Natural killer cell (primary cell): ENCODE measurements at regions of chr11 and their contacts with region 1.

Region 1: GRCh38 chr11:112219476-112220232 is 6.6 kb upstream of the PTS start:
- DNase-seq: peak in 1 of 2 donors; percentile 91
- ATAC-seq: peak; percentile 97 to 100 (median 100)
- H3K4me3 ChIP-seq: no peak overlapping the region
- H3K4me3 Mint-ChIP-seq: no peak overlapping the region
- H3K27ac ChIP-seq: no peak overlapping the region
- H3K27ac Mint-ChIP-seq: no peak overlapping the region
- H3K4me1 ChIP-seq: no peaks in the 10 kb centered on the region
- H3K4me1 Mint-ChIP-seq: peaks cover 0 to 6% of the 10 kb centered on the region in 2 donors
- H3K27me3 ChIP-seq: no peaks in the 10 kb centered on the region
- H3K27me3 Mint-ChIP-seq: no peaks in the 10 kb centered on the region
- CTCF ChIP-seq: peak; percentile 82

Region 2: DNA sequence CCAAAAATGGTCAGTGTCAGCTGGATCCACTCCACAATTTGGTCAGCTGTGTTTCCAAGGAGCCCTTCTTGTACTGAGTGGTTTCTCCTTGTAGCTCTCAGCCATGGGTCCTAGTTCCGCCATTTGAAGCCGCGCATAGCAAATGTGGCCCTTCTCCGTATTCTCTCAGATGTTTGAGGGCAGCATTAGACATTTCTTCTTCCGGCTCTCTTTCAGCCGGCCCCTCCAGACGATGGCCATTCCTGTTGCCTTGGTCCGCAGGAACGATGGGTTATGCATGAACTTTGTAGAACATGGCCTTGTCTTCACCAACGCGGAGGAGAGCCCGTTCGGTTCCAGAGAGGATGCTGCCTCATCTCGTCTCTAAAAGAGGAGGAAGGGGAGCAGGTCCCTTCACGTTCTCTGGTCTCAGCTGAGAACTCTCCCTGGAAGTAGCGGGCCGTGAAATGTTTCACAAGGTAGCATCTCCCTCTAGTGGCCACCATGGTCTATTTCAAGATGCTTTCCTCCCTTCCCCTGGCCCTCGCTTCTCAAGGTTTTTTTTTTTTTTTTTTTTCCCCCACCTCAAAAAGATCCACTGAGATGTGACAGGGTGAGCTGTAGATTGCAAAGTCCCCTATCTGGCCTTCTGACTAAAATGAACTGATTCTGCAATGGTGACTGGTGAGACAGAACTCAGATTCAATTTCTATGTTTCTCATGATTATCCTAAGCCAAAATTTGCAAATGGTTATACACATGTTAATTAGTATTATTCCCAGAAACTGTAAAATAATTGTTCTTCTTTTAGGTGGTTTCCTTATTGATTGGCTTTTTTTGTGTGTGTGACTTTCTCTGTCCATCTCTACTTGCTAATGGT is 60.8 kb after region 1 on chr11:
- intact Hi-C with region 1: loop called (anchors 1 kb)
- DNase-seq: peak; percentile 50 to 90
- ATAC-seq: peak; percentile 90 to 93 (median 91)
- H3K4me3 ChIP-seq: peak overlapping the region; percentile 55
- H3K4me3 Mint-ChIP-seq: peak overlapping the region; percentile 95
- H3K27ac ChIP-seq: peak overlapping the region; percentile 10
- H3K27ac Mint-ChIP-seq: peak overlapping the region; percentile 73 to 81
- H3K4me1 ChIP-seq: peaks cover 15% of the 10 kb centered on the region
- H3K4me1 Mint-ChIP-seq: peaks cover 12 to 16% of the 10 kb centered on the region in 2 donors
- H3K27me3 ChIP-seq: no peaks in the 10 kb centered on the region
- H3K27me3 Mint-ChIP-seq: peaks cover 0 to 3% of the 10 kb centered on the region in 2 donors
- CTCF ChIP-seq: peak; percentile 48

Region 3: GRCh38 chr11:112453601-112454577 is 234.2 kb after region 1 on chr11:
- intact Hi-C with region 1: loop called (anchors 10 kb)
- DNase-seq: peak in 1 of 2 donors; percentile 59
- ATAC-seq: peak; percentile 26 to 70 (median 50)
- H3K4me3 ChIP-seq: no peak overlapping the region
- H3K4me3 Mint-ChIP-seq: no peak overlapping the region
- H3K27ac ChIP-seq: no peak overlapping the region
- H3K27ac Mint-ChIP-seq: no peak overlapping the region
- H3K4me1 ChIP-seq: no peaks in the 10 kb centered on the region
- H3K4me1 Mint-ChIP-seq: no peaks in the 10 kb centered on the region
- H3K27me3 ChIP-seq: no peaks in the 10 kb centered on the region
- H3K27me3 Mint-ChIP-seq: peaks cover 9 to 29% of the 10 kb centered on the region in 2 donors
- CTCF ChIP-seq: peak; percentile 57

Region 4: GRCh38 chr11:112555491-112556364 is 336.1 kb after region 1 on chr11:
- intact Hi-C with region 1: loop called (anchors 2 kb)
- DNase-seq: peak in 1 of 2 donors; percentile 75
- ATAC-seq: peak in 2 of 3 donors; percentile 50 to 84
- H3K4me3 ChIP-seq: no peak overlapping the region
- H3K4me3 Mint-ChIP-seq: no peak overlapping the region
- H3K27ac ChIP-seq: no peak overlapping the region
- H3K27ac Mint-ChIP-seq: no peak overlapping the region
- H3K4me1 ChIP-seq: peaks cover 4% of the 10 kb centered on the region
- H3K4me1 Mint-ChIP-seq: peaks cover 0 to 5% of the 10 kb centered on the region in 2 donors
- H3K27me3 ChIP-seq: no peaks in the 10 kb centered on the region
- H3K27me3 Mint-ChIP-seq: peaks cover 0 to 7% of the 10 kb centered on the region in 2 donors
- CTCF ChIP-seq: no peak

Region 5: DNA sequence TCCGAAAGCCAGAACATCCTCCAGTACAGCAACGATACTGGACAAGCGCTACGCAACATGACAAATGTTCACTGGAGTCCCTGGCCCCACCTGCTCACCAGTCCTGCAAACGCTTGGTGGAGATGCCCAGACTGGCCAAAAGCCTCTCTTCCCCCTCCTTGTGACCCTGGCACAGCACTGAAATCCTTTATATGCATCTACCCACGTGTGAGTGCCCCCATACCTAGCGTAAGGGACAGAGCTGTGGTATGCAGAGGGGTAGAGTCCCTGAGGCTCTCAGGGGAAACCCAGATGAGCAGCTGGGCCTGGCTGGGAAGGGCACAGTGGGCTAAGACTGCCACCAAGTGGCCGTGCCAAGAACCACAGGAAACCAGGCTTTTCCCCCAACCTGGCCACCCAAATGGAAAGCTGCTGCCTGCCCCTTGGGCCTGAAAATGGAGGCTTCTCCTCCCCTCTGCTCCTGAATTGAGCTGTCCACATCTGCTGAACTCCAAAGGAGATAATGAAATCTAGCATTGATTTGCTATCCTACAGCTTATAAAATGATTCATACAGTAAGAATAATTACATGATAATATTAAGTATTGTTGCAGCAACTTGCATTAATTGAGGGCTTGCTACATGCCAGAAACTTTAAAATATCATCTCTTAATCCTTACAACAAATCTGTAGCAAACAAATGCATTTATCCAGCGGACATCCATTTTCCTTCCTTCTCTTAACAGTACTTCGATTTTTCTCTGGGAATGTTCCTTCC is 1070.0 kb after region 1 on chr11:
- intact Hi-C with region 1: loop called (anchors 1 kb)
- DNase-seq: peak; percentile 63 to 78
- ATAC-seq: peak; percentile 92 to 100 (median 100)
- H3K4me3 ChIP-seq: no peak overlapping the region
- H3K4me3 Mint-ChIP-seq: no peak overlapping the region
- H3K27ac ChIP-seq: no peak overlapping the region
- H3K27ac Mint-ChIP-seq: no peak overlapping the region
- H3K4me1 ChIP-seq: no peaks in the 10 kb centered on the region
- H3K4me1 Mint-ChIP-seq: no peaks in the 10 kb centered on the region
- H3K27me3 ChIP-seq: no peaks in the 10 kb centered on the region
- H3K27me3 Mint-ChIP-seq: peaks cover 13 to 28% of the 10 kb centered on the region in 2 donors
- CTCF ChIP-seq: peak; percentile 95